ENCODE measurements at regions of chr4 and their contacts with region 1.

Region 1: GRCh38 chr4:169464080-169464479 is 148.3 kb downstream of the NEK1 start:
- DNase-seq: no peak
- ATAC-seq: no peak
- H3K4me3 ChIP-seq: no peak overlapping the region
- H3K4me3 Mint-ChIP-seq: no peak overlapping the region
- H3K27ac ChIP-seq: no peak overlapping the region
- H3K27ac Mint-ChIP-seq: no peak overlapping the region
- H3K4me1 ChIP-seq: no peaks in the 10 kb centered on the region
- H3K4me1 Mint-ChIP-seq: no peaks in the 10 kb centered on the region
- H3K27me3 ChIP-seq: no peaks in the 10 kb centered on the region
- H3K27me3 Mint-ChIP-seq: no peaks in the 10 kb centered on the region
- CTCF ChIP-seq: no peak

Region 2: GRCh38 chr4:169189372-169189771 is 274.7 kb before region 1 on chr4:
- CTCF ChIA-PET with region 1: no interaction called
- POLR2A ChIA-PET with region 1: no interaction called
- intact Hi-C with region 1: no loop called
- DNase-seq: no peak
- ATAC-seq: no peak
- H3K4me3 ChIP-seq: no peak overlapping the region
- H3K4me3 Mint-ChIP-seq: no peak overlapping the region
- H3K27ac ChIP-seq: no peak overlapping the region
- H3K27ac Mint-ChIP-seq: no peak overlapping the region
- H3K4me1 ChIP-seq: no peaks in the 10 kb centered on the region
- H3K4me1 Mint-ChIP-seq: no peaks in the 10 kb centered on the region
- H3K27me3 ChIP-seq: no peaks in the 10 kb centered on the region
- H3K27me3 Mint-ChIP-seq: no peaks in the 10 kb centered on the region
- CTCF ChIP-seq: no peak

Region 3: DNA sequence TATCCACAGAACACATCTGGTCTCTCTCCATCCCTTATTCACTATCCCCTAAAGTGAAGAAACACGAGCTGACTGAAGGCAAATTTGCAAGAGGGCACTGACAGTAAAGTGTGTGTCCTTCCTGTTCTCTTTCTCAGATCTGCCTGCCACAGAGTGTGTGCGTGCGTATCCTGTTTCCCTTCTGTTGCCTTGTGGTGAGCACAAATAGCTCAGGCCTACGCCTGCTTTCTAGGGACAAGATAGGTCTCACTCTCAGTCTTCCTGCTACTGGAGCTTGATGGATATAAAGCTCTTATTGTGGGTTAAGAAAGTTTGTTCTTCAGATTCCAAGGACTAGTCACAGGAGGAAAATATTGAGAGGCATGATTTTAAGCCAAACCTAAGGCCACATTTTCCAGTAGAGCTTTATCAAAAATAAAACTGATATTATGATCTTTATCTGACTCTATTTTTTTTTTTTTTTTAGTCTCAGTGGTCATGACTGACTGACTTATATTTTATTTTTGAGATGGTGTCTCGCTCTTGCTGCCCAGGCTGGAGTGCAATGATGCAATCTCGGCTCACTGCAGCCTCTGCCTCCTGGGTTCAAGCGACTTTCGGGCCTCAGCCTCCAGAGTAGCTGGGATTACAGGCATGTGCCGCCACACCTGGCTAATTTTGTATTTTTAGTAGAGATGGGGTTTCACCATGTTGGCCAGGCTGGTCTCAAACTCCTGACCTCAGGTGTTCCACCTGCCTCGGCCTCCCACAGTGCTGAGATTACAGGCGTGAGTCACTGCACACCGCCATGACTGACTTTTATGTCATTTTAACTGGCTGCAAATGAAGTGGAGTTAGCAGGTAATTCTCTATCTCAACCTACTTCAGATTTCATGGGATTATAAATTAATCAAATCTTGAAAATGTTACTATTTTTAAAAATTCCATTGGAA is 53.0 kb before region 1 on chr4:
- CTCF ChIA-PET with region 1: no interaction called
- POLR2A ChIA-PET with region 1: no interaction called
- intact Hi-C with region 1: loop called in 1 of 2 experiments (anchors 10 kb)
- DNase-seq: peak; percentile 6 to 71 (median 40)
- ATAC-seq: peak; percentile 84
- H3K4me3 ChIP-seq: no peak overlapping the region
- H3K4me3 Mint-ChIP-seq: peak overlapping the region; percentile 19
- H3K27ac ChIP-seq: no peak overlapping the region
- H3K27ac Mint-ChIP-seq: peak overlapping the region; percentile 80
- H3K4me1 ChIP-seq: peaks cover 31% of the 10 kb centered on the region
- H3K4me1 Mint-ChIP-seq: peaks cover 26% of the 10 kb centered on the region
- H3K27me3 ChIP-seq: no peaks in the 10 kb centered on the region
- H3K27me3 Mint-ChIP-seq: no peaks in the 10 kb centered on the region
- CTCF ChIP-seq: no peak